ENCODE measurements at regions of chr15 and their contacts with region 1.

Region 1: DNA sequence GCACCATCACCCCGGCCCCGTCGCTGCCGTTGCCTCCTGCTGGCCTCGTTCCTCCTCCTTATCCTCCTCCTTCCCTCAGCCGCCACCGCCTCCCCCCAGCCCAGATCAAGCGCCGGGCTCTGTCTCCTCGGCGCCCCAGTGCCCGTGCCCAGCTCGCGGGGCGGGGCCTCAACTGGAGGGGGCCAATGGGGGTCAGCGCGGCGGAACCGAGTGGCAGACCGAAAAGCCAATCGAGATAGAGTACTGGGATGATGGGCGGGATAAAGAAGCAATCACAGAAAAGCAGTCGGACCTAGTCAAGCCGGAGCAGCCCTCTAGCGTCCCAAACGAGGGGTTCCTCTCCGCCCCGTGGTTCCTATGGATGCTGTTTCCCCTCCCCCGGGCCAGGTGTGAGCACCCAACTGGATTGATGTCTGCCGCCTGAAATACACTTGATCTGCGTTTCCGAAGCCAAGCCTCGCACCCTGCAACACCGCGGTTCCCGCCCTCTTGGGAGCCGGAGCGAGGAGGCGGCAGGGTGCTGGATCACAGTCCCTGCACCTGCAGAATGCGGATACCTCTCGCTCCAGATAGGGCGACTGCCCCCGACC is at the start of gene FRMD5:
- DNase-seq: peak; percentile 99
- H3K4me3 ChIP-seq: peak within 1 kb of the TSS; percentile 34 to 77 (median 58)
- H3K27ac ChIP-seq: peak within 1 kb of the TSS; percentile 82
- H3K4me1 ChIP-seq: peaks cover 33% of the 10 kb centered on the region
- H3K27me3 ChIP-seq: no peaks in the 10 kb centered on the region
- CTCF ChIP-seq: peak; percentile 32 to 60
- POLR2A ChIP-seq: peak; percentile 88
- total RNA-seq, gene FRMD5: 16.7 and 18.2 TPM in 2 replicates

Region 2: DNA sequence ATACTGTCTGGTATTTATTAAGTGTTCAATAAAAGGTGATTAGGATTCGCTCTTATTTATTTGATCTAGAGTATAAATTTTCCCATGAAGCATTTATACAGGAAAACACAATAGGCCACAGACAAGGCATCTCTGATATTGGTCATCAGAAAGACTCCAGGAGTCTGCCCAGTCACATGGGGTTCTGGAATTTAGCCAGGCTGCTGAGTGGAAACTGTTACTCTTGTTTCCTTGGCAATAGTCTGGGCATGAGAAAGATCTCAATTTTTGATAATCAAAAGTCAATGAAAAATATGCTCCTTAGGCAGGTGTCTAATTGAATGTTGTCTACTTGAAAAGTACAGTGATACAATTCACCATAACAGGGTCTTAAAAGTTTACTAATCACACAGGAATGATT is 161.4 kb before region 1 on chr15:
- CTCF ChIA-PET with region 1: no interaction called
- POLR2A ChIA-PET with region 1: no interaction called
- dilution Hi-C with region 1: no loop called
- intact Hi-C with region 1: loop called (anchors 1 kb)
- DNase-seq: peak; percentile 94
- H3K4me3 ChIP-seq: no peak overlapping the region
- H3K27ac ChIP-seq: peak overlapping the region; percentile 52
- H3K4me1 ChIP-seq: peaks cover 42% of the 10 kb centered on the region
- H3K27me3 ChIP-seq: no peaks in the 10 kb centered on the region
- CTCF ChIP-seq: no peak
- POLR2A ChIP-seq: no peak

Region 3: DNA sequence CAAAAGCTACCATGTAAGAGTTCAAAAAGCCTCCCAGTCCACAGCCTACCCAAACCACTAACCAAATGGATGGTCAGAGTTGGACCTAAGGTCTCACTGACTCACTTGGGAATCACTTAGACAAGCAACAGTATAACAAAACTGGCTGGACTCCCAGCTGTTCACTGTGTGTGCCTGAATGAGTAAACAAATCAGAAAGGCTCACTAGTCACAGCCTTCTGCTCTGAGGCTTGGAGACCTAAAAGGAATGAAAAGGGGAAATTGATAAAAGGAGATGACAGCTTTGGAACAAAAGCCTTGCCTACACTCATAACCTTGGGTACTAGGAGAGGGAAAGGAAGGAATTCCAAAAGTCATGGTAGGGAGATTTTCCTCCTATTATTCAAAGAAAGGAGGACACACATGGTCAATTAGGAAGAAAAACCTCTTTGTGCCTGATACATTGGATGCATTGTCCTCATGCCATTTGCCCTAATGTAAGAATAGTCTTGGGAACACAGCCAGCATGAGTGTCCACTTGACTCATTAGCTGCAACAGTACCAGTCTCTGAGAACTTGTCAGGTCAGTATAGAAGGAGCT is 92.5 kb before region 1 on chr15:
- CTCF ChIA-PET with region 1: interaction called, 4 read pairs
- POLR2A ChIA-PET with region 1: no interaction called
- dilution Hi-C with region 1: no loop called
- intact Hi-C with region 1: loop called (anchors 1 kb)
- DNase-seq: peak; percentile 97
- H3K4me3 ChIP-seq: no peak overlapping the region
- H3K27ac ChIP-seq: peak overlapping the region; percentile 75
- H3K4me1 ChIP-seq: peaks cover 21% of the 10 kb centered on the region
- H3K27me3 ChIP-seq: no peaks in the 10 kb centered on the region
- CTCF ChIP-seq: no peak
- POLR2A ChIP-seq: no peak

Region 4: DNA sequence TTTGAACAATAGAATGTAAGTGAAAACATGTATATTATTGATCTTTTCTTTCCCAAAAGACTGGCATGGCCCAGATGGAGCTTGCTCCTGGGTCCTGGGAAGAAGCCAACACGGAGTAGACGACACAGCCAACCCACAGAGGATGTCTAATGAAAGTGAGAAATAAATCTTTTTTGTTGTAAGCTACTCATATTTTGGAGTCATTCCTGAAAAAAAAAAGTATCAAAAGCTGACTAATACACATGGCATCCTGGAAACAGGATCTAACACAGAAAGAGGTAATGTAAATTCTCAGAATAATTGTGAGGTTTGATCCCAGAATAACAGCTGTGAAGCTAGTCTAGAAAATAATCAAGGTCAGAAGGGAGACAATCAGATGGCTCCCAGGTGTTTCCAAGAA is 12.4 kb after region 1 on chr15:
- CTCF ChIA-PET with region 1: interaction called, 17 read pairs
- POLR2A ChIA-PET with region 1: interaction called, 12 read pairs
- dilution Hi-C with region 1: no loop called
- intact Hi-C with region 1: loop called (anchors 1 kb)
- DNase-seq: peak; percentile 91
- H3K4me3 ChIP-seq: no peak overlapping the region
- H3K27ac ChIP-seq: peak overlapping the region; percentile 91
- H3K4me1 ChIP-seq: peaks cover 15% of the 10 kb centered on the region
- H3K27me3 ChIP-seq: no peaks in the 10 kb centered on the region
- CTCF ChIP-seq: no peak
- POLR2A ChIP-seq: no peak

Region 5: DNA sequence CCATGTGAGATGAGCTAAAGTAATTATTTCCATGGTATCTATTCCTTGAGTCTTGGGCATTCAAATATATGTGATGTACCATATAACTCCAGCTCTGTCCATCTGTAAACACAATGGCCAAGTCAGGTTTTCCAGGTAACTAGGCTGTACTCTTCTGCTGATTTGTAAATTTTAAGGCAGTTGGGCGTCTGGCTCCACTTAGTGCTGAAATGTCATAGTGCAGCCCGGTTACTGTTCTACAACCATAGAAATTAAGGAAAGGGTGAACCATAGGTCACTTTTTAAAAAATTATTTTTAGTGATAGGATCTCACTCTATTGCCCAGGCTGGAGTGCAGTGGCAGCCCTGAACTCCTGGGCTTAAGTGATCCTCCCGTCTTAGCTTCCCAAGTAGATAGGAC is 48.6 kb after region 1 on chr15:
- CTCF ChIA-PET with region 1: no interaction called
- POLR2A ChIA-PET with region 1: no interaction called
- dilution Hi-C with region 1: no loop called
- intact Hi-C with region 1: no loop called
- DNase-seq: no peak
- H3K4me3 ChIP-seq: no peak overlapping the region
- H3K27ac ChIP-seq: no peak overlapping the region
- H3K4me1 ChIP-seq: no peaks in the 10 kb centered on the region
- H3K27me3 ChIP-seq: no peaks in the 10 kb centered on the region
- CTCF ChIP-seq: no peak
- POLR2A ChIP-seq: no peak

Measured in endothelial cell of umbilical vein (primary cell).